Cardiac septum (tissue), 1 donor: ENCODE measurements at regions of chr9 and their contacts with region 1.

Region 1: DNA sequence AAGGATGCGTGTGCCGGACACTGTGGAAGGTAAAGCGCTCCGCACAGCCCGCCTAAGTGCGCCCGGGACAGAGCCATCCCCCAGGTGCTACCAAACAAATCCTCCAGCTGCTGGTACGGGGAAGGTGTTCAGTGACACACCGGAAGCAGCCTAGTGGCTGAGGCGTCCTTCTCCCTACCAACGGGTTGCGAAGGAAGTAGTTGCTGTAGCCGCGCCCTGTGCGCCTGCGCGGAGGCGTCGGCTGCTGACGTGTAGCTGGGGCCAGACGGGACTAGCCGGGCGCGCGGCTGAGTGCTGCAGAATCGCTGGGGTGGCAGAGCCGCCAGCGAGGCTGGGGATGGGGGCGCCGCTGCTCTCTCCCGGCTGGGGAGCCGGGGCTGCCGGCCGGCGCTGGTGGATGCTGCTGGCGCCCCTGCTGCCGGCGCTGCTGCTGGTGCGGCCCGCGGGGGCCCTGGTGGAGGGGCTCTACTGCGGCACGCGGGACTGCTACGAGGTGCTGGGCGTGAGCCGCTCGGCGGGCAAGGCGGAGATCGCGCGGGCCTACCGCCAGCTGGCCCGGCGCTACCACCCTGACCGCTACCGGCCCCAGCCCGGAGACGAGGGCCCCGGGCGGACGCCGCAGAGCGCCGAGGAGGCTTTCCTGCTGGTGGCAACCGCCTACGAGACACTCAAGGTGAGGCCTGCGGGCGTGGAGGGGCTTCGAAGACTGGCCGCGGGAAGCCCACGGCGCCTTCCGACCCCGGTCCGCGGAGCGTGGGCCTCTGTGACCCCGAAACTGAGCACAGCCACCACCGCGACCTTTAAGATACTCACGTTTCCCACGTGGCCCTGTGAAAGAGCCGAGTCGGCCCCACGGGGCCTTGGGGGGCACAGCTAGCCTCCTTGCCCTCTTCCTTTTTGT is at the start of gene DNAJC25:
- DNase-seq: peak; percentile 99
- total RNA-seq, gene DNAJC25: 5.0 TPM

Region 2: DNA sequence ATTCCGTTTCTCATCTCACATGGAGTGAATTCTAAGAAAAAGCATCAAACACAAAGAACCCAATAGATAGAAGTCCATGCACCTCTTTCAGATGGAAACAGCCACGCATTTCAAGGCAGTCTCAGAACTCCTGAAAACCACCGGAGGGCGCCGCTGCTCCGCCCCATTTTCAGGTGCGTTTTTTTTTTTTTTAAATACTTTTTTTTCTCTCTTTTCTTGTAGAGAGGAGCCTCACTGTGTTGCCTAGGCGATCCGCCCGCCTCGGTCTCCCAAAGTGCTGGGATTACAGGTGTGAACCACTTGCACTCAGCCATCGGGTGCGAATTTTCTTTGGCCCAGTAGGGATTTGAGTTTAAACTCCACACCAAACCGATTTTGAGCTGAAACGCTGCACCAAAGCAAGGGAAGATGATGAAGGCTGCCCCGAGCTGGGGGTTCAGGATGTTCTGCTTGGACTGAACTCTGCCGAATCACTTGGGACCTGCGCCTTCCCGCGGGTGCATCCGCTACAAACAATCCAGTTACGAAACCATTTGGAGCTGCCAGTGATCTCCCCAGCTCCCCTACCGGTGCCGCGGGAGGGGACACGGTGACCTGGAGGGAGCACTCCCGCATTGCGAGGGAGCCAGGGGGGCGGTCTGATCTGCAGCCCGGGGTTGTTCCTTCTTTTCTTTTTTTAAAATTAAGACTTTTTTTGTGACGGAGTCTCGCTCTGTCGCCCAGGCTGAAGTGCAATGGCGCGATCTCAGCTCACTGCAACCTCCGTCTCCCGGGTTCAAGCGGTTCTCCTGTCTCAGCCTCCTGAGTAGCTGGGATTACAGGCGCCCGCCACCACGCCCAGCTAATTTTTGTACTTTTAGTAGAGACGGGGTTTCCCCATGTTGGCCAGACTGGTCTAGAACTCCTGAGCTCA is 33.2 kb before region 1 on chr9:
- intact Hi-C with region 1: loop called (anchors 2 kb)
- DNase-seq: no peak

Region 3: GRCh38 chr9:111661150-111661801 is 30.0 kb after region 1 on chr9 and contains the start of gene GNG10:
- intact Hi-C with region 1: loop called (anchors 2 kb)
- DNase-seq: peak; percentile 84
- total RNA-seq, gene GNG10: 36.4 TPM